Naive thymus-derived CD4-positive, alpha-beta T cell (primary cell): ENCODE measurements at regions of chr16 and their contacts with region 1.

Region 1: GRCh38 chr16:74695450-74696422 is 4.9 kb downstream of the MLKL start:
- DNase-seq: peak; percentile 33 to 67 (median 51)
- ATAC-seq: peak; percentile 89
- H3K4me3 ChIP-seq: peak overlapping the region; percentile 45
- H3K4me3 Mint-ChIP-seq: peak overlapping the region; percentile 74 to 94 (median 85)
- H3K27ac ChIP-seq: peak overlapping the region; percentile 45
- H3K27ac Mint-ChIP-seq: peak overlapping the region in 8 of 9 donors; percentile 43 to 87 (median 80)
- H3K4me1 ChIP-seq: peaks cover 14 to 24% of the 10 kb centered on the region in 2 donors
- H3K4me1 Mint-ChIP-seq: peaks cover 35 to 74% (median 59%) of the 10 kb centered on the region in 7 donors
- H3K27me3 ChIP-seq: no peaks in the 10 kb centered on the region
- H3K27me3 Mint-ChIP-seq: no peaks in the 10 kb centered on the region

Region 2: DNA sequence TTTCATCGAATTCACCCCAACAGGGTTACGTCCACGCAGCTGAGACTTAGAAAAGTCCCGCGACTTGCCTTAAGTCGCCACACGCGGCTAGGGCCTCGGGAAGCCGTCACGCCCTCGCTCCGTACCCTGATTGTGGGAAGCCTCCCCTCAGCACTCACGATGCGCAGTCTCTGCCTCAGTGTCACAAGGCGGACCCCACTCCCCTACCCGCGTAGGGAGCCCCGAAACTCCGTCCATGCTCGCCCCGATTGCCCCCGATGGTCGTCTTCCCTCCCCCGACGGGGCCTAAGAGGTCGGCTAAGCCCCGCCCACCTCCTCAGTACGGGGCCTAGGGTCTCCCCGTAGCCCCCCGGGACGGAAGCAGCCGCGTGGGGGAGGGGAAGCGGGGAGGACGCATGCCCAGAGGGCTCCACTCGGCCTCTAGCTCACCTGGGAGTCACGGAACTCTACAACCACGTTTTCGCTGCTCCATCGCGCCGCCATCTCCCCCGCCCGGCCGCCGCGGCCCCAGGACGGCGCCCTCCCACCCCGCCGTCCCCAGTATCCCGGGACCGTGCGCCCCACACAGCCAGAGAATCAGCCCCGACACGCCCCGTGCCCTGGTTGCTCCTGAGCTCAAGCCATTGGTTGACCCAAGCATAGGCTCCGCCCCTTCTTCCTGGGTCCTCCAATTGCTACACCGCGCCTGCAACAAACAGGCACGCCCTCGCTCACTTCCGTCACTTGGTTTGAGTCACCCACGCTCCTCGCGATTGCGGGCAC is 289.0 kb after region 1 on chr16 and contains the start of gene WDR59:
- CTCF ChIA-PET with region 1: no interaction called
- POLR2A ChIA-PET with region 1: no interaction called
- intact Hi-C with region 1: loop called in 1 of 2 experiments (anchors 1 kb)
- DNase-seq: peak; percentile 87 to 99 (median 98)
- ATAC-seq: peak; percentile 100
- H3K4me3 ChIP-seq: peak within 1 kb of the TSS; percentile 98
- H3K4me3 Mint-ChIP-seq: peak within 1 kb of the TSS; percentile 90 to 98 (median 95)
- H3K27ac ChIP-seq: peak within 1 kb of the TSS; percentile 86
- H3K27ac Mint-ChIP-seq: peak within 1 kb of the TSS; percentile 72 to 96 (median 92)
- H3K4me1 ChIP-seq: peaks cover 5 to 6% of the 10 kb centered on the region in 2 donors
- H3K4me1 Mint-ChIP-seq: peaks cover 0 to 27% (median 23%) of the 10 kb centered on the region in 7 donors
- H3K27me3 ChIP-seq: no peaks in the 10 kb centered on the region
- H3K27me3 Mint-ChIP-seq: no peaks in the 10 kb centered on the region
- total RNA-seq, gene WDR59: 82.7 to 130 (median 84.7) TPM